Mucosa of descending colon (tissue), 3 donors: ENCODE measurements at regions of chr3 and their contacts with region 1.

Region 1: DNA sequence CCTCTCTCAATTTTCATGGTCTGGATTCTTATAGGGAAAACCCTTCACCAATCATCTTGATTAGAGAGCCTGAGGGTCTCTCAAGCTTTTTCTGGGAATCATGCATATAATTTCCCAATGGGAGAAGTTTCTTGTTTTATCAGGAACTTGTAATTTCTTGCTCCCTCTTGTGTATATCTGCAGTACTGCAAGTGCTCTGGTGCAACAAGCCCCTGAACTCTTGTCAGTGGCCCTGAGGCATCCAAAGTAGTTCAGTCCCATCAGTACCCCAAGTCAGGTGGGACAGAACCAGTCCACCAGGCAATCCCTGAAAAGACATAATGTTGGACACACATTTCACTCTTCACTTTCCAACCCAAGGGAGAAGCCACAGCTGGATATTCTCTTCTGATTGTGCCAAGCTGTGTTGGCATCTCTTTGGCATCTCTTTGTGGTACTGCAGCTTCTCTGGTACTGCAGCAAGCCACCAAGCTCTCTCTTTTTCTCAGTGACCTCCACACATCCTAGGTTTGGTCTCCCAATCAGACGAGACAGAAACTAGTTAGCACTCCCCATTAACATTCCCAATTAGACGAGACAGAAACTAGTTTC is 214.5 kb downstream of the ZIC4 start:
- DNase-seq: peak in 1 of 3 donors; percentile 49
- ATAC-seq: peak; percentile 29
- H3K4me3 ChIP-seq: no peak overlapping the region
- H3K4me1 ChIP-seq: no peaks in the 10 kb centered on the region
- CTCF ChIP-seq: peak; percentile 36

Region 2: DNA sequence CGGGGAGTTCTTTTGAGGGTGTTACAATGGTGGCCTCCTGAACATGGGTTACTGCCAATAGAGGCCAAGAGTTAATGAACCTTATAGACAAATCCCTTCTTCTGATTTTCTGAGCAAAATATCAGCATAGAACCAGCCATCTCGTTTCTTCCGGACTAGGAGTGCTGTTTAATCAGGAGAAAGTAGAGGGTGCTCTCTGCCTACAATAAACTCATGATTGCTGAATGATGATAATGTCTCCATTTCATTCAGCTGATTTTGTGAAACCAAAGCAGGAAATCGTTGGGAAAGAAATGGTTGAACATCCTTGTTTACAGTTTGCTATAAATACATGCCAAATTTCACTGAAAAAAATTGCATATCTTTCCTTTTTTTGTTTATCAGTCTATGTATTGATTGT is 444.0 kb before region 1 on chr3:
- intact Hi-C with region 1: loop called in 1 of 2 experiments (anchors 10 kb)
- DNase-seq: no peak
- ATAC-seq: no peak
- H3K4me3 ChIP-seq: no peak overlapping the region
- H3K4me1 ChIP-seq: no peaks in the 10 kb centered on the region
- CTCF ChIP-seq: no peak

Region 3: GRCh38 chr3:147008886-147009285 is 183.0 kb before region 1 on chr3:
- intact Hi-C with region 1: no loop called
- DNase-seq: no peak
- ATAC-seq: no peak
- H3K4me3 ChIP-seq: no peak overlapping the region
- H3K4me1 ChIP-seq: no peaks in the 10 kb centered on the region
- CTCF ChIP-seq: no peak

Region 4: DNA sequence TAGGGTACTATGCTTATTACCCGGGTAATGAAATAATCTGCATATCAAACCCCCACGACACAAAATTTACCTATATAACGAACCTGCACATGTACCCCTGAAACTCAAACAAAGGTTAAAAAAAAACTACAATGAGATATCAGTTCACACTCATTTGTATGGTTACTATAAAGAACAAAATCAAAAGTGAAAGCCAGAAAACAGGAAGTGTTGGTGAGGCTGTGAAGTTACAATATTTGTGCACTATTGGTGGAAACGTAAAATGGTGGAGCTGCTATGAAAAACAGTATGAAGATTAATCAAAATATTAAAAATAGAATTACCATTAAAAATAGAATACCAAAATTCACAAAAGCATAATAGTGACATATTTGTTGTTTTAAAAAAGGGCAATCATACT is 346.1 kb after region 1 on chr3:
- intact Hi-C with region 1: no loop called
- DNase-seq: no peak
- ATAC-seq: no peak
- H3K4me3 ChIP-seq: no peak overlapping the region
- H3K4me1 ChIP-seq: no peaks in the 10 kb centered on the region
- CTCF ChIP-seq: no peak